ENCODE measurements at regions of chr5 and their contacts with region 1.

Region 1: GRCh38 chr5:132419502-132420468 is 50.3 kb downstream of the SLC22A5 start:
- DNase-seq: peak; percentile 42 to 77 (median 60)
- H3K4me3 ChIP-seq: no peak overlapping the region
- H3K4me3 Mint-ChIP-seq: peak overlapping the region; percentile 76 to 91 (median 78)
- H3K27ac ChIP-seq: peak overlapping the region; percentile 12
- H3K27ac Mint-ChIP-seq: peak overlapping the region; percentile 84 to 99 (median 98)
- H3K4me1 ChIP-seq: peaks cover 97% of the 10 kb centered on the region
- H3K4me1 Mint-ChIP-seq: peaks cover 90 to 98% (median 97%) of the 10 kb centered on the region in 3 donors
- H3K27me3 ChIP-seq: no peaks in the 10 kb centered on the region
- H3K27me3 Mint-ChIP-seq: no peaks in the 10 kb centered on the region

Region 2: GRCh38 chr5:132396589-132397031 is 23.2 kb before region 1 on chr5:
- CTCF ChIA-PET with region 1: no interaction called
- POLR2A ChIA-PET with region 1: no interaction called
- DNase-seq: no peak
- H3K4me3 ChIP-seq: no peak overlapping the region
- H3K4me3 Mint-ChIP-seq: peak overlapping the region in 4 of 7 donors; percentile 9 to 26 (median 14)
- H3K27ac ChIP-seq: no peak overlapping the region
- H3K27ac Mint-ChIP-seq: peak overlapping the region in 5 of 8 donors; percentile 35 to 76 (median 73)
- H3K4me1 ChIP-seq: peaks cover 60% of the 10 kb centered on the region
- H3K4me1 Mint-ChIP-seq: peaks cover 58 to 91% (median 82%) of the 10 kb centered on the region in 3 donors
- H3K27me3 ChIP-seq: no peaks in the 10 kb centered on the region
- H3K27me3 Mint-ChIP-seq: no peaks in the 10 kb centered on the region

Region 3: GRCh38 chr5:132466433-132467286 is 46.9 kb after region 1 on chr5:
- CTCF ChIA-PET with region 1: interaction called, 103 read pairs
- POLR2A ChIA-PET with region 1: interaction called, 11 read pairs
- DNase-seq: peak; percentile 63 to 88 (median 78)
- H3K4me3 ChIP-seq: peak overlapping the region; percentile 57
- H3K4me3 Mint-ChIP-seq: peak overlapping the region; percentile 72 to 92 (median 82)
- H3K27ac ChIP-seq: peak overlapping the region; percentile 64
- H3K27ac Mint-ChIP-seq: peak overlapping the region; percentile 87 to 100 (median 98)
- H3K4me1 ChIP-seq: peaks cover 95% of the 10 kb centered on the region
- H3K4me1 Mint-ChIP-seq: peaks cover 98 to 100% (median 99%) of the 10 kb centered on the region in 3 donors
- H3K27me3 ChIP-seq: no peaks in the 10 kb centered on the region
- H3K27me3 Mint-ChIP-seq: no peaks in the 10 kb centered on the region

Region 4: GRCh38 chr5:132473019-132473531 is 53.3 kb after region 1 on chr5:
- CTCF ChIA-PET with region 1: interaction called, 42 read pairs
- POLR2A ChIA-PET with region 1: interaction called, 29 read pairs
- DNase-seq: peak; percentile 81 to 96 (median 89)
- H3K4me3 ChIP-seq: no peak overlapping the region
- H3K4me3 Mint-ChIP-seq: peak overlapping the region; percentile 39 to 86 (median 64)
- H3K27ac ChIP-seq: peak overlapping the region; percentile 62
- H3K27ac Mint-ChIP-seq: peak overlapping the region; percentile 93 to 99 (median 96)
- H3K4me1 ChIP-seq: peaks cover 86% of the 10 kb centered on the region
- H3K4me1 Mint-ChIP-seq: peaks cover 87 to 99% (median 97%) of the 10 kb centered on the region in 3 donors
- H3K27me3 ChIP-seq: no peaks in the 10 kb centered on the region
- H3K27me3 Mint-ChIP-seq: peaks cover 0 to 9% of the 10 kb centered on the region in 2 donors

Region 5: DNA sequence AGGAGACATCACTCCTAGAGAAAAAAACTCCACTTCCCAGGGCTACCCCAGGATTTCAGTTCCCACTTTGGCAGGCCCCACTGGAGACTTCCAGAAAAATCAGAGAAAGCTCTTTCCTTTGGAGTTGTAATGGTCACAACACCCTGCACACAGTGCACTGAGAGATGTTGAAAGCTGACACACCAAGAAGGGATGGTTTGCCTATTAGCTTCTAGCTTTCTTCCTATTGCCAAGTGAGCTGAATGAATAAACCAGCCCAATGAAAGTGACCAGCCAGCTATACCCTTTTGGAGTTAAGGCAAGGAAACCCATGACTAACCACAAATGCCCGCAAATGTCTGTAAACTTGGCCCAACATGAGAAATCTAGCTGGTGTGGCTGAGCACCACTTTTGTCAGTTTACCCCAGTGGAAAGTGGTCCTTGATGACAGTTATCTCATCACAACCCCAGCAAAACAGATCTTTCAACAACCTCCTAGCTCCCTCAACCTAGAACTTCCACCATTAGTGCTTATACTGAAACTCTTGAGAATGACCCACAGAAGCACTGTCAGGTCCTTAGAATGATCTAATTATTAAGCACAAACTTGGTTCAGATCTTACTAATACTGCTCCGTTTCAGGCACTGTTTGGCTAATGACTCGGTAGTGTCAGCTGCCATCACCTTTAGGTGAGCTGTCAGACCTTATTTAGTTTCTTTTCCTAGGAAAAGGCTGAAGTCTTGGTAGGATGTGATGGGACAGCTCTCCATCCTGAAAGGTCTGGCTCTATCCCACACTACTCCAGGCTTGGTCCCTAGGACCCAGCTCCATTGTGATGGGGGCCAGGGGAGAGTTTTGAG is 59.5 kb after region 1 on chr5:
- CTCF ChIA-PET with region 1: interaction called, 42 read pairs
- POLR2A ChIA-PET with region 1: interaction called, 29 read pairs
- DNase-seq: peak in 2 of 5 donors; percentile 10 to 18
- H3K4me3 ChIP-seq: no peak overlapping the region
- H3K4me3 Mint-ChIP-seq: peak overlapping the region in 6 of 7 donors; percentile 6 to 58 (median 30)
- H3K27ac ChIP-seq: no peak overlapping the region
- H3K27ac Mint-ChIP-seq: peak overlapping the region; percentile 72 to 98 (median 94)
- H3K4me1 ChIP-seq: peaks cover 73% of the 10 kb centered on the region
- H3K4me1 Mint-ChIP-seq: peaks cover 79 to 94% (median 82%) of the 10 kb centered on the region in 3 donors
- H3K27me3 ChIP-seq: no peaks in the 10 kb centered on the region
- H3K27me3 Mint-ChIP-seq: peaks cover 0 to 9% of the 10 kb centered on the region in 2 donors